ENCODE measurements at regions of chrX and their contacts with region 1.

Region 1: GRCh38 chrX:63506320-63506719 is 155.2 kb upstream of the SPIN4 start:
- DNase-seq: peak; percentile 63
- ATAC-seq: peak; percentile 65
- H3K4me3 ChIP-seq: no peak overlapping the region
- H3K27ac ChIP-seq: no peak overlapping the region
- H3K4me1 ChIP-seq: peaks cover 6% of the 10 kb centered on the region; the same call in 1 of the 2 replicates
- H3K27me3 ChIP-seq: no peaks in the 10 kb centered on the region
- CTCF ChIP-seq: peak; percentile 77

Region 2: GRCh38 chrX:63350941-63351616 is 155.2 kb before region 1 on chrX and contains the start of gene SPIN4:
- CTCF ChIA-PET with region 1: no interaction called
- POLR2A ChIA-PET with region 1: no interaction called
- intact Hi-C with region 1: loop called (anchors 5 kb)
- DNase-seq: peak; percentile 89
- ATAC-seq: peak; percentile 94
- H3K4me3 ChIP-seq: peak within 1 kb of the TSS; percentile 96
- H3K27ac ChIP-seq: peak within 1 kb of the TSS; percentile 63
- H3K4me1 ChIP-seq: peaks cover 14% of the 10 kb centered on the region; the same call in 1 of the 2 replicates
- H3K27me3 ChIP-seq: no peaks in the 10 kb centered on the region
- CTCF ChIP-seq: no peak
- total RNA-seq, gene SPIN4: 9.0 and 12.1 TPM in 2 replicates

Region 3: GRCh38 chrX:63421411-63421810 is 84.9 kb before region 1 on chrX:
- CTCF ChIA-PET with region 1: no interaction called
- POLR2A ChIA-PET with region 1: no interaction called
- intact Hi-C with region 1: loop called (anchors 5 kb)
- DNase-seq: no peak
- ATAC-seq: no peak
- H3K4me3 ChIP-seq: no peak overlapping the region
- H3K27ac ChIP-seq: no peak overlapping the region
- H3K4me1 ChIP-seq: peaks cover 31% of the 10 kb centered on the region
- H3K27me3 ChIP-seq: no peaks in the 10 kb centered on the region
- CTCF ChIP-seq: peak; percentile 44; the same call in 1 of the 2 replicates

Region 4: GRCh38 chrX:63686878-63687714 is 180.8 kb after region 1 on chrX:
- CTCF ChIA-PET with region 1: no interaction called
- POLR2A ChIA-PET with region 1: no interaction called
- intact Hi-C with region 1: loop called (anchors 10 kb)
- DNase-seq: peak; percentile 68
- ATAC-seq: peak; percentile 69
- H3K4me3 ChIP-seq: no peak overlapping the region
- H3K27ac ChIP-seq: no peak overlapping the region
- H3K4me1 ChIP-seq: no peaks in the 10 kb centered on the region
- H3K27me3 ChIP-seq: no peaks in the 10 kb centered on the region
- CTCF ChIP-seq: peak; percentile 77

Region 5: DNA sequence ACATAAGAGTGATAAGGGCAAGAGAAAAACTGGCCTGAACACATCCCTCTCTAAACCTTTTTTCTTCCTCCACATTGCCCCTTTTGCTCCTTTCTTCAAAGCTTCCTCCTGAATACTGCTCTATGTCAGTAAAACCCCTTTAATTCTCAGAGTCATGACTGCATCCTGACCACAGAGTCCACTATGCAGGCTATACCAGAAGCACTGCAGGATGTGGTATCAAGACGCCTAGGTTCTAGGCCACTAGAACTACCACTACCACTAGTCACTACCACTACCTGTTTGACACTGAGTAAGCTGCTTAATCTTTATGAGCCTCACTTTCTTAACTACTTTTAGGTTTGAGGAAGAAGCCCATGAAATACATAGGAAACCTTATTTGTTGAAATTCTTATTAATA is 240.0 kb after region 1 on chrX:
- CTCF ChIA-PET with region 1: no interaction called
- POLR2A ChIA-PET with region 1: no interaction called
- intact Hi-C with region 1: no loop called
- DNase-seq: no peak
- ATAC-seq: no peak
- H3K4me3 ChIP-seq: no peak overlapping the region
- H3K27ac ChIP-seq: no peak overlapping the region
- H3K4me1 ChIP-seq: no peaks in the 10 kb centered on the region
- H3K27me3 ChIP-seq: no peaks in the 10 kb centered on the region
- CTCF ChIP-seq: no peak